ENCODE measurements at regions of chr12 and their contacts with region 1.

Region 1: DNA sequence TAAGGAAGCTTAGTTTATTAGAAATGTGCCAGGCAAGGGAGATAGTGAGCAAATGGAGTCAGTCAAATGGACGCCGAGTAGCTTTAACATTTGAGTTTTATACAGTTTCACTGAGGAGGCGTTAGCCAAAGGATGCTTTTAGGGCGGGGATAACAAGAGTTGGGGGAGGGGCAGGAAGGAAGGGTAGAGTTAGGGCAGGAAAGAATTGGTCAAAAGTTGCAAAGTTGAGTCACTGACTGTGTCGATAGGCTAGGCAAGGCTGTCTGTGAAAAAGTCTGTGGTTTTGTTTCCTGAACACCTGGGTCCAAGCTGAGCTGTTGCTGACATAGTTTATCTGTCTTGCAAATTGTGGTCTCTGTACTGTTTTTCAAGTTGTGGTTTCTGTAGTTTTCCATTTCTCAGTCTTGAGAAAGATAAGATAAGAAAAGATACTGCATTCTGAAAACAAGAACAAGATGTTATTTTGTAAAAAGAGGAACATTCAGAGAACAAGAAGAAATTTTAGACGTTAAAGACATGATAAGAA is 62.6 kb upstream of the RESF1 start:
- DNase-seq: peak; percentile 39 to 95 (median 86)
- ATAC-seq: peak; percentile 96 to 97
- H3K4me3 Mint-ChIP-seq: peak overlapping the region; percentile 55 to 87 (median 80)
- H3K27ac Mint-ChIP-seq: peak overlapping the region; percentile 91 to 99 (median 97)
- H3K4me1 Mint-ChIP-seq: peaks cover 21 to 76% (median 62%) of the 10 kb centered on the region in 4 donors
- H3K27me3 Mint-ChIP-seq: peaks cover 0 to 1% (median 0%) of the 10 kb centered on the region in 5 donors

Region 2: DNA sequence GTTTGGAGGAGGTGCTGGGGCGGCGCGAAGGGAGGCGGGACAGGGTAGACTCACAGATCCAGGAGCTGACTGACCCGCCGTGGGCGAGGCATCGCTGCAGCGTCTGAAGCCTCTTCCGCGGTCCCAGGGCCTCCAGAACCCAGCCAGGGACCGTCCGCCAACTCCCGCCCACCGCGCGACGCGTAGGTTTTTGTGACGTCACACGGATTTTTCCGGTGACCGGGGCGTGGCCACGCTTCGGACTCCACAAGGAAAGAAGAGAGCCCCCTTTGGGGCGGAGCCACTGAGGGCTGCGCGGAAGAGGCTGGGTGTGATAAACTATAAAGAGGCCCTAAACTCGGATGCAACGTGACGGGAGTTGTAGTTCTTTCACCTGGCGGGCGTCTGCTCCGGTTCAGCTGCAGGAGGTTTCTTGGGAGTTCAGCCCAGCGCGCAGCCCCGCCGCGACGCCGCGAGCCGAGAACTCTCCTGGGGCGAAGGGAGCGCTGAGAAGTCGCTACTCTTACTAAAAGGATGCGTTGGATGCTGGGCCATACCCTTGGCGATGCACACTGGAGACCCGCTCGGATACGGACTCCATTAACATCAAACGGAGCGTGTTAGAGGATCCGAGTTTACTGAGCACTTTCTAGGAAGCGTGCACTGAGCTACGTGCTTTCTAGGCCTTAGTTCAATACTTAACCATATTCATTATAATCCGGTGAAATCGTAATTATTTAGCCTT is 167.5 kb before region 1 on chr12 and contains the start of gene AMN1:
- POLR2A ChIA-PET with region 1: interaction called, 28 read pairs
- DNase-seq: peak; percentile 85 to 100 (median 98)
- ATAC-seq: peak; percentile 89 to 91
- H3K4me3 Mint-ChIP-seq: peak within 1 kb of the TSS; percentile 95 to 100 (median 99)
- H3K27ac Mint-ChIP-seq: peak within 1 kb of the TSS; percentile 96 to 100 (median 99)
- H3K4me1 Mint-ChIP-seq: peaks cover 26 to 77% (median 59%) of the 10 kb centered on the region in 4 donors
- H3K27me3 Mint-ChIP-seq: no peaks in the 10 kb centered on the region
- polyA plus RNA-seq, gene AMN1: 8.9 to 16.7 (median 12.8) TPM

Region 3: DNA sequence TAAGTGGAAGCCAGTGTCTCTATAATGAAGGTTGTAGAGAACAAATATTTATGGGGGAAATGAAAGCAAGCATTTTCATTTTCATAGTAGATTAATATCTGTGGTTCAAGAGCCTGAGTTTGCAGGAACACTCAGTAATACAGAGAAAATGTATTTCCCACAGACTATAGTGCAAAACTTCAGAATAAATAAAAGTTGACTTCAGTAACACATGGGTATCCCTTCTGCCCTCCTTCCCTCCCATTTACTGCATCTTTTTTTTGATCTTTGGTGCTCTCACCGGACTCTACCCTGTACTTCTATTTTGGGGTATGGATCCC is 92.4 kb before region 1 on chr12:
- POLR2A ChIA-PET with region 1: interaction called, 42 read pairs
- DNase-seq: no peak
- ATAC-seq: peak in 1 of 2 donors; percentile 28
- H3K4me3 Mint-ChIP-seq: peak overlapping the region; percentile 85 to 100 (median 94)
- H3K27ac Mint-ChIP-seq: peak overlapping the region; percentile 91 to 99 (median 95)
- H3K4me1 Mint-ChIP-seq: peaks cover 28 to 64% (median 58%) of the 10 kb centered on the region in 4 donors
- H3K27me3 Mint-ChIP-seq: no peaks in the 10 kb centered on the region

Region 4: DNA sequence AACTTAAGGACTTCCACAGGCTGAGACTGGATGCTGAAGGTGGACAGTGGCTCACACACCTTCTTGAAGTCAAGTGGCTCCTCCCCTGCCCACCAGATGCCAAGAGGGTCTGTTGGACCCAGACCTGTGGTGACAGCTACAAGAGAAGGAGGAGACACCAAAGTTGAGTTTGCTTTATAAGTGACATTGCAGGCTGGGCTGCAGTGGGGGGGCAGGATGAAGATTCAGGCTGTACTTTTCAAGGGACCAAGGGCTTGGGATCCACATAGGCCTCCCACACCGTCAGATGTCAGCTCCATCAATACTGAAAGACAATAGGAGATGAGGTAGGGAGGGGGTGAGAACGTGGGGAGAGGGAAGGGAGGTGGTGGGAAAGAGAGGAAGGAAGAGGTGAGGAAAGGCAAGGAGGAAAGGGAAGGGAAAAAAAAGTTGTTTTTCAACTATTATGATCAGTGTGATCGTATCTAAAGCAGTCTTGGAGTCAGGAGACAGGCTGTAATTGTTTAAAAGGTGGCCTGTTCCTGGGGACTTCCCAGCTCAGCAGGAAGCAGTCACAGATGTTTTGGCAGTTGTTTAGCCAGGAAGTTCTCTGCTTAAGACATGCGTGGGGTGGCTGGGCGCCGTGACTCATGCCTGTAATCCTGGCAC is 21.5 kb before region 1 on chr12:
- POLR2A ChIA-PET with region 1: interaction called, 25 read pairs
- DNase-seq: peak; percentile 35 to 85 (median 70)
- ATAC-seq: peak; percentile 92 to 98
- H3K4me3 Mint-ChIP-seq: peak overlapping the region; percentile 62 to 85 (median 78)
- H3K27ac Mint-ChIP-seq: peak overlapping the region; percentile 96 to 99 (median 98)
- H3K4me1 Mint-ChIP-seq: peaks cover 22 to 71% (median 53%) of the 10 kb centered on the region in 4 donors
- H3K27me3 Mint-ChIP-seq: no peaks in the 10 kb centered on the region